Ovary (tissue), 10 donors: ENCODE measurements at regions of chr14 and their contacts with region 1.

Region 1: DNA sequence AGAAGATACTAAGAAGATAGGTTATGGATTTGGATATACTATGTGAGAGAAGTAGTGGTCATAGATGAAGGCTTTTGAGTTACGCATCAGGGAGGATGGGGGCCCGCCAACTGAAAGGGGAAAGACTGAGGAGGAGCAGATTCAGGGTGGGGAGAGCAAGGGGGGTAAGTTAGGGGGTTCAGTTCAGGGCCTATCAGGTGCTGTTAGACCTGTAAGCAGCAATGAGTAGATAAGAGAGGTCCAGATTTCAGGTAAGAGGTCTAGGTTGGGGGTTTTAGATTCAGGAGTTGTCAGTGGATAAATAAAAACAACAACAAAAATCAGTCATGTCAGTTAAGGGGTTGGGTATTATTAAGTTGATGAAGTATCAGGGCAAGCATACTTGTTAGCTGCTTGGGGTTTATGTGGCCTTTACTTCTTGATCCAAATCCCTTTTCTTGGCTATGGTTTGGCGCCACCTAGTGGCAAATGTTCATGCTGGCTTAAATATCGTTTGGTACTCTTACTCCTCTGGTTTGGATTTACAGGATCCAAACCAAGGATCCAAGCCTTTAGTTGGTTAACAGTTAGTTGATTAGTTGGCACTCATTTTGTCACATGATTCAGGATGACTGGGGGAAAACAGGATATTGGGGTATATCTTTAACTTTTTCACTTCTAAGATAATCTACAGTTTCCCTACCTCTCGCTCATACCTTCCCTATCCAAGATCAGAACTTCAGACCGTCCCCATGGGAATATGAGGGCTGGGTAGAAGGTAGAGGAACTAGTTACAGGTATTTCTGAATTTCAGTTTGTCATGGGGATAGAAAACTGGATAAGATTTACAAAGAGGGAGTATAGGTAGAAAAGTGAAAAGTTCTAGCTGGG is 65.1 kb downstream of the PCNX1 start:
- DNase-seq: peak; percentile 82 to 92 (median 83)
- H3K4me3 ChIP-seq: no peak overlapping the region
- H3K27ac ChIP-seq: no peak overlapping the region
- H3K4me1 ChIP-seq: no peaks in the 10 kb centered on the region
- H3K27me3 ChIP-seq: no peaks in the 10 kb centered on the region
- CTCF ChIP-seq: peak; percentile 76 to 84 (median 83)
- EP300 ChIP-seq: no peak
- POLR2A ChIP-seq: no peak

Region 2: DNA sequence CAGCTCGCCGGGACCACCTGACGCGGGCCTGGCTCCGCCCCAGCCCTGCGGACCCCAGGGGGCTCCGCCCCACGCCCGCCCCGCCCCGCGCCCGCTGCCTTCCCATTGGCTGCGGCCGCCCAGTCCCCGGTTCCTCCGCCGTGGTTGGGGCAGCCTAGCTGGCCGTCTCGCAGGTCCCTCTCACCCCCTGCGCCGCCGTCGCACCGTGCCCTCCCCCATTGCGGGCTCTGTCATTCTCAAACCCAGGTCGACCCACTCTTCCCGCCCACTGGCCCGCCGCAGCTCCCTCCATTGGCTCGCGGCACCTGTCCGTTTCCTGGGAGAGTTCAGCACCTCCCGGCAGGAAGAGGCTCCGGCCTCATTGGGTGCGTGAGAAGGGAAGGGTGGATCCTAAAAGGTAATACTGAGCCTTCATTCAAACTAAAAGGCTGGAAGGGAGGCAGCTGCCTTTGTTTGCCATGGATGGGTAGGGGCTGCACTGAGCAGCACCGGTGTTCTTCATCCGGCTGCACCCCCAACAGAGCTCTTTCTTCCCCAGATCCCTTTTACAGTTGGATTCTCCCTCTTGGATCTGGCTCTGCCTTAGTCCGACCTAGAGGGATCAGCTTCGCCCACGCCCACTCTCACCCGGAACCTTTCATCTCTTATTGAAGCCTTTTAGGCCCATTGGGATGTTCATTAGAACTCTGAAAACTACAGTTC is 162.6 kb before region 1 on chr14:
- intact Hi-C with region 1: loop called in 1 of 4 experiments (anchors 10 kb)
- DNase-seq: peak; percentile 86 to 91 (median 87)
- H3K4me3 ChIP-seq: peak overlapping the region; percentile 56
- H3K27ac ChIP-seq: peak overlapping the region; percentile 57 to 70
- H3K4me1 ChIP-seq: no peaks in the 10 kb centered on the region
- H3K27me3 ChIP-seq: no peaks in the 10 kb centered on the region
- CTCF ChIP-seq: no peak
- EP300 ChIP-seq: no peak
- POLR2A ChIP-seq: peak; percentile 18

Region 3: GRCh38 chr14:70816525-70816924 is 155.8 kb before region 1 on chr14:
- intact Hi-C with region 1: loop called (anchors 5 to 10 kb)
- DNase-seq: no peak
- H3K4me3 ChIP-seq: no peak overlapping the region
- H3K27ac ChIP-seq: no peak overlapping the region
- H3K4me1 ChIP-seq: no peaks in the 10 kb centered on the region
- H3K27me3 ChIP-seq: no peaks in the 10 kb centered on the region
- CTCF ChIP-seq: no peak
- EP300 ChIP-seq: no peak
- POLR2A ChIP-seq: no peak

Region 4: GRCh38 chr14:70821584-70822529 is 150.5 kb before region 1 on chr14:
- intact Hi-C with region 1: loop called (anchors 5 to 10 kb)
- DNase-seq: peak; percentile 59 to 75 (median 69)
- H3K4me3 ChIP-seq: peak overlapping the region; percentile 43
- H3K27ac ChIP-seq: peak overlapping the region in 1 of 2 donors; percentile 42
- H3K4me1 ChIP-seq: peaks cover 2% of the 10 kb centered on the region
- H3K27me3 ChIP-seq: no peaks in the 10 kb centered on the region
- CTCF ChIP-seq: no peak
- EP300 ChIP-seq: no peak
- POLR2A ChIP-seq: peak; percentile 32

Region 5: GRCh38 chr14:70907176-70907995 is 65.0 kb before region 1 on chr14 and contains the start of gene PCNX1:
- intact Hi-C with region 1: loop called (anchors 5 to 10 kb)
- DNase-seq: peak; percentile 90 to 94 (median 93)
- H3K4me3 ChIP-seq: peak within 1 kb of the TSS; percentile 98
- H3K27ac ChIP-seq: peak within 1 kb of the TSS; percentile 92 to 95
- H3K4me1 ChIP-seq: peaks cover 15% of the 10 kb centered on the region
- H3K27me3 ChIP-seq: no peaks in the 10 kb centered on the region
- CTCF ChIP-seq: peak; percentile 84 to 95 (median 94)
- EP300 ChIP-seq: no peak
- POLR2A ChIP-seq: peak; percentile 58
- total RNA-seq, gene PCNX1: 49.5 to 101 (median 74.3) TPM